ENCODE measurements at regions of chr5 and their contacts with region 1.

Region 1: DNA sequence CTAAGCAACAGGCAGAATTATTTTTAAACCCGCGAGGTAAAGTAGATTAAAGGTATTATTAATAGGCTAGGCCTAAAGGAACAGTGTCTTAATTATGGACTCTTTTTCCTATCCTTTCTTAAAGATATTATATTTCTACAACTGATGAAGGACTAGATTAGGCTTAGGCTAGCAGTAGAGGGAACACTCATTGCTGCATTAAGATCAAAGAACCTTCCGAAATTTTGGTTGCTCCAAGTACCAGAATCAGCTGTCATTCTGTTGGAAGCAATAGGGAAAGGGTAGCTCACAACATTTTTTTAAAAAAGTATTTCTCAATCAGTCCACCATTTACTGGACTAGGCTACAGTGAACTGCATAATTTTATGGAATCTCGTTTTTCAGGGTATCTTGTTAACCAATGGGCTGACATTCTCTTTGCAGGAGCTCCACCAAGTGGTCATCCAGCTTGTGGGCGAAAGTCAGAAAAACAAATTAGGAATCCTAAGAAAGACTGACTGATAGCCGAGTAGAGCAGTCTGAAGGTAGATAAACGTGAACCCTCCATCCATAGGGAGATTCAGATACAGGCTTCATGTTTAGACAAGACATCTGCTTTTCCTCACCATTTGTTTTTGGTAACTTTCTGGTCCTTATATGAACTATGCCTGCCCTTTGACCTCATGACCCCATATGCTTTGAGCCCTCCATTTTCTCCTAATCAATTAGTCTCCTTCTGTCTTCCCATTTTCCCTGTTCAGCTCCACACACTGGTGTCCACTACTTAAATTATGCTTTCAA is 103.6 kb upstream of the CHD1 start:
- H3K4me3 Mint-ChIP-seq: peak overlapping the region; percentile 58
- H3K27ac Mint-ChIP-seq: peak overlapping the region; percentile 24
- H3K4me1 Mint-ChIP-seq: peaks cover 59% of the 10 kb centered on the region
- H3K27me3 Mint-ChIP-seq: no peaks in the 10 kb centered on the region

Region 2: DNA sequence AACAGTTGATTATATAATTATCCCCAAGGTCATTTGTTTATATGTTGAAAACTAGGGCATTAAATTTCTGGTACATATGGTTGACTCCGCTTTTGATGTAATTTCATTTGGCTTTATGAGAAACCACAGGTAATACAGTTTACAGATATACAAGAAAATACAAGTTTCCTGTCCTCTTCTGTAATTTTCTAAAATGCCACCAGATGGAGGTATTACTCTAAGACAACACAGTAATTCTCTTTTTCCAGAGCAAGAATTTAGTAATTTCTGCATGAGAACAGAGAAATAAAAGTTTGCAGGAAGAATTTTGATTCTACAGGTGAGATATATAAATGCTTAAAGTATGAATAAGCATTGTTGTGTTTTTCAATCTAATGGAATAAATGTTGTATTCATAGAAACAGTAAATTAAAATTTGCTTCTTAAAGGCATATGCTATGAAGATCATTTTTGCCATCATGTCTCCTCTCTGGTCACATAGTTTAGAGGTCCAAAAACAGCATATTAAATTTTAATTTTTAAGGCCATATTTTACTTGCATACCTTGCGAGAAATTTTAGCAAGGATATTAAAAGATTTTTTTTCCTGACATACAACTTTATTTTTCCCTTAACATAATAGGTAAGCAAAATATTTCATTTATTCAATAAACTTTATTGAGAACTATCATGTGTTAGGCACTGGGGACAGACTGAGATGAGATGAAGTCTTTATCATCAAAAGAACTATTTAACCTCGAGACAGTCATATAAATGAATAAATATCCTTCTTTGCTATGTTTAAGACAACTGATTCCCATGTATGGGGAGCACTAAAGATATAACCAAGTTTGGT is 126.3 kb before region 1 on chr5:
- intact Hi-C with region 1: loop called (anchors 1 kb)
- H3K4me3 Mint-ChIP-seq: no peak overlapping the region
- H3K27ac Mint-ChIP-seq: no peak overlapping the region
- H3K4me1 Mint-ChIP-seq: peaks cover 22% of the 10 kb centered on the region
- H3K27me3 Mint-ChIP-seq: no peaks in the 10 kb centered on the region

Region 3: DNA sequence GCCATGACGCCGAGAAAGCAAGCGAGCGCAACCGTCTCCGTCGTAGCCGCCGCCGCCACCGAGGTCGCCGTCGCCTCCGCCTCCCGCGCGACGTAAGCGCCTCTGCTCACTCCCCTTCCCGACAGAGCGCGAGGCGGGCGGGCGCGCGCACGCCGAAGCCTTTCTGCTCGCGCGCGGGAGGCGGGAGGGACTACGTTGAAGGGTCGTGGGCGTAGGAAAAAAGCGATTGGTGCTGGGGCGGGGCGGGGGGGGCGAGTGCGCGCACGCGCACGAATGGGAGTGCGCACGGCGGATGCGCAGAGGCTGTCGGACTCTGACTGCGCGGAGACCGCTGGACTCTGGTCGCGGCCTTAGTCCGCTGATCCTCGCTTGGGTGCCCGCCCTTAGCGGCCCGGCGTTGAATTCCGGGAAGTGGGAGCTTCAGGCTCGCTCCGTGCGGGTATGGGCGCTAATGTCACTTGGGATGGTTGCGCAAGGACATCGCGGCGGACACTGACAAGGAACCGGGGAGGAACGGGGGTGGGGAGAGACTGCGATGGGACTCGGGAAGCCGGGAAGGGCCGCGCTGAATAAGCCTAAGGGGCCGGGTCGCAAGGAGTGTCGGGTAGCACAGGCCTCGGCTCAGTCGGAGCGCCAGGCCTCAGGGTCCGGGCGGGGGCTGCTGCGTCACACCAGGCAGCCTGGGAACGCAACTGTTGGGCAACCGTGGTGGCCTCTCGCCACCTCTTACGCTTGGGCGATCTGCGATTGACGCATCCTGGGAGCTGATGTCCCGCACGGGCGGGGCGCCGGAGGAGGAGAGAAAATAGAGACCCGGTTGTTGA is 103.3 kb before region 1 on chr5 and contains the start of gene CHD1:
- intact Hi-C with region 1: loop called (anchors 1 kb)
- H3K4me3 Mint-ChIP-seq: peak within 1 kb of the TSS; percentile 100
- H3K27ac Mint-ChIP-seq: peak within 1 kb of the TSS; percentile 95
- H3K4me1 Mint-ChIP-seq: peaks cover 31% of the 10 kb centered on the region
- H3K27me3 Mint-ChIP-seq: no peaks in the 10 kb centered on the region

Region 4: GRCh38 chr5:98989727-98990126 is 42.7 kb before region 1 on chr5:
- intact Hi-C with region 1: loop called (anchors 5 kb)
- H3K4me3 Mint-ChIP-seq: no peak overlapping the region
- H3K27ac Mint-ChIP-seq: peak overlapping the region; percentile 67
- H3K4me1 Mint-ChIP-seq: peaks cover 18% of the 10 kb centered on the region
- H3K27me3 Mint-ChIP-seq: no peaks in the 10 kb centered on the region

Region 5: DNA sequence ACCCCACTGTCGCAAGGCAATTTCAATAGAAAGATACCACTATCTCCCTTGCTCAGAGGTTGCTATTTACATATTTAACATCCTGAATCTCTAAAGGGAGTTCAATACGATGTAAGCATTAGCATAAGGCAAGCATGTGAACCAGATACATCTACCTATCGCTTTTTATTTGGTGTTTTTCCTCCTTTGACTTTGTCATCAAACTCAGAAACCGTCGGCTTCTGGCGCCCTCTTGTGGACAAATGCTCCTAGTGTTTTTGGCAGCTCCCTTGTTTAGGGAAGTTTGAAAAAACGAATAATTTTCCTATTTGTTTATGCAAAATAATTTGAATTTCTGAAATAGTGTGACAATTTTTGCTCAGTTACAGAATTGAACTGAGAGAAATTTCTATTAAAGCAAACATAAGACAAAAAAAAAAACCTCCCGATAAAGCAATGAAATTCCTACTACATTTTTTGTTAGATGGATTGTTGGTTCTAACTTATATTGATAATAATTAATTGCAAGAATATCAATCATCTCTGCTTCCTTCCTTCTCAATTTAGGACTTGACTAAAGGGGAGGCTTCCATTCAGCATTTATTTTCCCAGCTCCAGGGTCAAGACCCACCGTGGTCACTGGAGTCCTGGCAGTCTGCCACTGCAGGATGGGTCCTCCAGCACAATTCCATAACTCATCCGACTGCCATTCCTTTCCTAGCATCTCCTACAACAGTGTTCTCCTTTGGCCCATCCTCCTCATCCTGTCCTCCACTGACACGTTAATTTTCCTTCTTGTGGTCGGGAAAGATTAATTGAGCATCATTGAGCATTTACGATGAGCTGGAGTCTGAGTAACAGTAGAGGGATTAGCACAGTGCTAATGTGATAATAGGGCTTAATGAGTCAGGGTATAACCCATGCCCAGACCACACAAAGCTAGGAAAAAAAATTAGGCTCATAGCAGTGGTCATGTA is 28.2 kb after region 1 on chr5:
- intact Hi-C with region 1: loop called (anchors 2 kb)
- H3K4me3 Mint-ChIP-seq: no peak overlapping the region
- H3K27ac Mint-ChIP-seq: no peak overlapping the region
- H3K4me1 Mint-ChIP-seq: peaks cover 26% of the 10 kb centered on the region
- H3K27me3 Mint-ChIP-seq: no peaks in the 10 kb centered on the region

Region 6: GRCh38 chr5:99129768-99130501 is 97.5 kb after region 1 on chr5:
- intact Hi-C with region 1: no loop called
- H3K4me3 Mint-ChIP-seq: no peak overlapping the region
- H3K27ac Mint-ChIP-seq: no peak overlapping the region
- H3K4me1 Mint-ChIP-seq: no peaks in the 10 kb centered on the region
- H3K27me3 Mint-ChIP-seq: no peaks in the 10 kb centered on the region